CD8-positive, alpha-beta T cell (primary cell): ENCODE measurements at regions of chr7 and their contacts with region 1.

Region 1: GRCh38 chr7:29126804-29127203 is 19.5 kb downstream of the CPVL start:
- DNase-seq: no peak
- ATAC-seq: no peak
- H3K4me3 ChIP-seq: no peak overlapping the region
- H3K4me3 Mint-ChIP-seq: no peak overlapping the region
- H3K27ac ChIP-seq: no peak overlapping the region
- H3K27ac Mint-ChIP-seq: no peak overlapping the region
- H3K4me1 ChIP-seq: no peaks in the 10 kb centered on the region
- H3K4me1 Mint-ChIP-seq: no peaks in the 10 kb centered on the region
- H3K27me3 ChIP-seq: no peaks in the 10 kb centered on the region
- H3K27me3 Mint-ChIP-seq: peaks cover 10% of the 10 kb centered on the region
- CTCF ChIP-seq: no peak

Region 2: DNA sequence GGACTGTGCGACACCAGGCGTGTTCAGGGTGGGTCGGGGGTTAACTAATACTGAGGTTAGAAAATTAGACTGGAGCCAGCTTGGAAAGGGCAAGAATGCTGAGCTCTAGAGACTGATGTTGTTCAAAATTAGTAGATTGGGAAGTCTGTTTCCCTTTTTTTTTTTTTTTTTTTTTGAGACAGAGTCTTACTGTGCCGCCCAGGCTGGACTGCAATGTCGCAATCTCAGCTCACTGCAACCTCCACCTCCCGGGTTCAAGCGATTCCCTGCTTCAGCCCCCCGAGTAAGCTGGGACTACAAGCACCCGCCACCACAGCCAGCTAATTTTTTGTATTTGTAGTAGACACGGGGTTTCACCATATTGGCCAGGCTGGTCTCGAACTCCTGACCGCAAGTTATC is 22.2 kb after region 1 on chr7:
- CTCF ChIA-PET with region 1: no interaction called
- POLR2A ChIA-PET with region 1: no interaction called
- intact Hi-C with region 1: loop called in 1 of 2 experiments (anchors 1 kb)
- DNase-seq: no peak
- ATAC-seq: no peak
- H3K4me3 ChIP-seq: no peak overlapping the region
- H3K4me3 Mint-ChIP-seq: no peak overlapping the region
- H3K27ac ChIP-seq: no peak overlapping the region
- H3K27ac Mint-ChIP-seq: no peak overlapping the region
- H3K4me1 ChIP-seq: no peaks in the 10 kb centered on the region
- H3K4me1 Mint-ChIP-seq: peaks cover 10% of the 10 kb centered on the region
- H3K27me3 ChIP-seq: peaks cover 0 to 7% of the 10 kb centered on the region in 2 experiments
- H3K27me3 Mint-ChIP-seq: peaks cover 25% of the 10 kb centered on the region
- CTCF ChIP-seq: no peak